ENCODE measurements at regions of chr2 and their contacts with region 1.

Region 1: DNA sequence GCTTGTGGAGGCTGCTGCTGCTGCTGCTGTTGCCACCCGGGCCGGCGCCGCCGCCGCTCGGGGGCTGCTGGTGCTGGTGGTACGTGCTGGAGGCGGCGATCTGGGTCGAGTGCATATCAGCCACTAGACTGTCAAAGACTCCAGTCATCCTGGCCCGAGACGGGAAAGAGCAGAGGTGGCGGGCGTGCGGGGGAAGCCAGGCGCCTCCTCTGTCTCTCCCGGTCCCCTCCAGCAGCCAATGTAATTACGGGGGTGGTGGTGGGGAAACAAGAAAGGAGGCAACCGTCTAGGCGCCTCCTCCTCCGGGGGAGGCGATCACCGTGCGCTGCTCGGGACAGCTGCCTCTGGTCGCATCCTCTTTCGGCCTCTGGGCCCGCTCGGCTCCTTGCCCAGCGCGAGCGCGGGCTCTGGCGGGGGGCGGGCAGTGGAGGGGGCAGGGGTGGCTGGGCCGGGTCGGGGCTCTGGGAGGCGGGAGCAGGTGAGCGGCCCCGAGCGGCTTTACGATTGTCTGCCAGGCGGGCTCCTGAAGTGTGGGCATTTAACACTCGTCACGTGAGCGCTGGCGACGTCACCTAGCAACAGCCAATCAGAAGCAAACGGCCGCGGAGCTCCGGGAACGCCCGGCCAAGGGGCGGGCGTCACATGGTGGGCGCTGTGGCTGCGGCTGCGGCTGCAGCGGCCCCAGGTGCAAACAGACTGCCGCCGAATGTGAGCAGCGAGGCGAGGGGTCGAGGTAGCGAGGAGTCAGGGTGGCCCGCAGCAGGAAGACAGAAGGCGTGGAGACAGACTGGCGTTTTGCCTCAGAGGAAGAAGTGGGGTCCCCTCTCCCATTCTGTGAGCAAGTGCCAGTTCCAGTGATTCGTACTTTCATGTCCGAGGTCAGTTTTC is at the start of gene DLX2:
- DNase-seq: peak; percentile 92
- ATAC-seq: peak; percentile 50
- H3K4me3 ChIP-seq: peak within 1 kb of the TSS; percentile 78
- H3K27ac ChIP-seq: no peak within 1 kb of the TSS
- H3K4me1 ChIP-seq: peaks cover 31% of the 10 kb centered on the region
- H3K27me3 ChIP-seq: no peaks in the 10 kb centered on the region
- CTCF ChIP-seq: no peak
- total RNA-seq, gene DLX2: 0.29 and 1.4 TPM in 2 replicates

Region 2: GRCh38 chr2:171574149-171574795 is 528.4 kb before region 1 on chr2:
- CTCF ChIA-PET with region 1: interaction called, 3 read pairs
- POLR2A ChIA-PET with region 1: no interaction called
- intact Hi-C with region 1: loop called (anchors 5 kb)
- DNase-seq: peak; percentile 84
- ATAC-seq: peak; percentile 98
- H3K4me3 ChIP-seq: no peak overlapping the region
- H3K27ac ChIP-seq: no peak overlapping the region
- H3K4me1 ChIP-seq: no peaks in the 10 kb centered on the region
- H3K27me3 ChIP-seq: no peaks in the 10 kb centered on the region
- CTCF ChIP-seq: peak; percentile 96

Region 3: DNA sequence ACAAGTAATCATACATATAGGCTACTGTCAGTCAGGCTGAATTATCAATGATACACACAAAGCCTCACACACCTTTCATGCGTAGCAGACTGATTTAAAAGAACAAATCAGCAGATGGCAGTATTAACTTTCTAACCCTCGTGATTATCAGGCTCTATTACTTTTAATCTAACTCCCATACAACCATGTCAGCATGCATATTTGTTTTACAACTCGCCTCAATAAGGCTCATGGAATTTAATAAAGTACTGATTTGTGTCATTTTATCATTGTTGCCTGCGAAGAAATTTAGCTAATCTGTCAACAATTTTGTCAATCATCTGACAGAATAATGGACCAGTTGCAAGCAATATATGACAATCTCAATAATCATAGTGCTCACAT is 291.4 kb before region 1 on chr2:
- CTCF ChIA-PET with region 1: no interaction called
- POLR2A ChIA-PET with region 1: no interaction called
- intact Hi-C with region 1: loop called (anchors 1 kb)
- DNase-seq: peak; percentile 57
- ATAC-seq: peak; percentile 82
- H3K4me3 ChIP-seq: no peak overlapping the region
- H3K27ac ChIP-seq: no peak overlapping the region
- H3K4me1 ChIP-seq: no peaks in the 10 kb centered on the region
- H3K27me3 ChIP-seq: no peaks in the 10 kb centered on the region
- CTCF ChIP-seq: peak; percentile 61

Region 4: GRCh38 chr2:171922230-171923022 is 180.2 kb before region 1 on chr2 and contains the start of gene HAT1:
- CTCF ChIA-PET with region 1: no interaction called
- POLR2A ChIA-PET with region 1: no interaction called
- intact Hi-C with region 1: loop called (anchors 2 kb)
- DNase-seq: peak; percentile 98
- ATAC-seq: peak; percentile 94
- H3K4me3 ChIP-seq: peak within 1 kb of the TSS; percentile 86
- H3K27ac ChIP-seq: peak within 1 kb of the TSS; percentile 72
- H3K4me1 ChIP-seq: peaks cover 19% of the 10 kb centered on the region
- H3K27me3 ChIP-seq: no peaks in the 10 kb centered on the region
- CTCF ChIP-seq: no peak
- total RNA-seq, gene HAT1: 58.7 and 76.8 TPM in 2 replicates

Region 5: GRCh38 chr2:171939743-171940071 is 162.9 kb before region 1 on chr2:
- CTCF ChIA-PET with region 1: interaction called, 3 read pairs
- POLR2A ChIA-PET with region 1: no interaction called
- intact Hi-C with region 1: loop called (anchors 1 kb)
- DNase-seq: no peak
- ATAC-seq: no peak
- H3K4me3 ChIP-seq: no peak overlapping the region
- H3K27ac ChIP-seq: no peak overlapping the region
- H3K4me1 ChIP-seq: no peaks in the 10 kb centered on the region
- H3K27me3 ChIP-seq: no peaks in the 10 kb centered on the region
- CTCF ChIP-seq: no peak

Region 6: DNA sequence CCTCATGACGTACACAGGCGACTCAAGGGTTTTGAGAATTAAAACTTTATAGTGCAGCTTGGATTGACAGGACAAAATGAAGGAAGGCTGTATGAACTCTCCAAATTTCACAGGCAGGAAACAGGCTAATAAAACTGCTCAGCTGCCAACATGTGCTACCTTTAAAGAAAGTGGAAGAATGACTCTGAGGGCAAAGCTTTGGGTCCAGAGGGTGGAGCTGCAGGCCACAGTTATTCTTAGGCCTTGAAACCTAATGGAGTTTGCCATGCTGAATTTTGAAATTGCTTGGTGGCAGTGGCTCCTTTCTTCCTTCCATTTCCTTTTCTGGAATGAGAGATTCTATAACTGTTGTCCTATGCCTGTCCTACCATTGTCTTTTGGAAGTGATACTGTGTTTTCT is 145.6 kb before region 1 on chr2:
- CTCF ChIA-PET with region 1: no interaction called
- POLR2A ChIA-PET with region 1: no interaction called
- intact Hi-C with region 1: loop called (anchors 2 kb)
- DNase-seq: peak; percentile 44
- ATAC-seq: peak; percentile 68
- H3K4me3 ChIP-seq: no peak overlapping the region
- H3K27ac ChIP-seq: no peak overlapping the region
- H3K4me1 ChIP-seq: peaks cover 6% of the 10 kb centered on the region
- H3K27me3 ChIP-seq: no peaks in the 10 kb centered on the region
- CTCF ChIP-seq: peak; percentile 51

Measured in PC-3 (cell line).